ENCODE measurements at regions of chr7 and their contacts with region 1.

Region 1: DNA sequence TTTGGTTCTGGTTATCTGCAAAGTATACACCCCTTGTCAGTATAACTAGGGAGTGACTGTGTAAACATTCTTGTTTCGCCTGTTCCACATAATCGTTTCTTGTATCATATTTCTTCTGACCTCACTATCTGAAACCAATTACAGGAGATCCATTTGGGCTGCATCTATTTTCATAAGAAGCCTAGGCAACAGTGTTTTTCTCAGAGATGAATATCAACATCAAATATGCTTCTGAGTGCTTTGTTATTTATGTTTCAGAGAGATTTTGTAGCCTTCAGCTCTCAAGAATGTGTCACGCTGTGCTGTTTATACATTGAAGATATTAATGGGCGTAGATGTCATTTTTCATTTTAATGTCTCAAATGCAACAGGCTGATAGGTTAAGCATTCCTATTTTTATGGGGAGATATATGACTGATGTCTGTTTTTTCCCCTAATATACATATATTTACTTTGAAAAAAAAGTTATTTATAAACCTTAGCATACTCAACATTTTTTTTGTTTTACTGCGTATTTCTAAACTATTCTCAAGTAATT is 115.5 kb downstream of the FOXP2 start:
- DNase-seq: no peak
- ATAC-seq: peak; percentile 56; the same call in 1 of the 2 replicates
- H3K4me3 ChIP-seq: no peak overlapping the region
- H3K27ac ChIP-seq: no peak overlapping the region
- H3K4me1 ChIP-seq: no peaks in the 10 kb centered on the region; the same call in 1 of the 2 replicates
- H3K27me3 ChIP-seq: no peaks in the 10 kb centered on the region
- CTCF ChIP-seq: no peak

Region 2: GRCh38 chr7:114405427-114405826 is 124.7 kb before region 1 on chr7:
- CTCF ChIA-PET with region 1: no interaction called
- POLR2A ChIA-PET with region 1: no interaction called
- in situ Hi-C with region 1: no loop called
- intact Hi-C with region 1: no loop called
- DNase-seq: no peak
- ATAC-seq: no peak; the same call in 1 of the 2 replicates
- H3K4me3 ChIP-seq: no peak overlapping the region
- H3K27ac ChIP-seq: no peak overlapping the region
- H3K4me1 ChIP-seq: no peaks in the 10 kb centered on the region
- H3K27me3 ChIP-seq: no peaks in the 10 kb centered on the region
- CTCF ChIP-seq: peak; percentile 44; the same call in 1 of the 2 replicates

Region 3: GRCh38 chr7:114502454-114503254 is 27.5 kb before region 1 on chr7:
- CTCF ChIA-PET with region 1: no interaction called
- POLR2A ChIA-PET with region 1: no interaction called
- in situ Hi-C with region 1: no loop called
- intact Hi-C with region 1: loop called (anchors 1 kb)
- DNase-seq: no peak
- ATAC-seq: peak; percentile 87
- H3K4me3 ChIP-seq: no peak overlapping the region
- H3K27ac ChIP-seq: peak overlapping the region; percentile 76
- H3K4me1 ChIP-seq: peaks cover 13% of the 10 kb centered on the region; the same call in 1 of the 2 replicates
- H3K27me3 ChIP-seq: no peaks in the 10 kb centered on the region
- CTCF ChIP-seq: no peak

Region 4: GRCh38 chr7:114574384-114574783 is 44.2 kb after region 1 on chr7:
- CTCF ChIA-PET with region 1: no interaction called
- POLR2A ChIA-PET with region 1: interaction called, 12 read pairs
- in situ Hi-C with region 1: no loop called
- intact Hi-C with region 1: no loop called
- DNase-seq: no peak
- ATAC-seq: no peak
- H3K4me3 ChIP-seq: no peak overlapping the region
- H3K27ac ChIP-seq: no peak overlapping the region
- H3K4me1 ChIP-seq: no peaks in the 10 kb centered on the region
- H3K27me3 ChIP-seq: no peaks in the 10 kb centered on the region
- CTCF ChIP-seq: no peak

Region 5: DNA sequence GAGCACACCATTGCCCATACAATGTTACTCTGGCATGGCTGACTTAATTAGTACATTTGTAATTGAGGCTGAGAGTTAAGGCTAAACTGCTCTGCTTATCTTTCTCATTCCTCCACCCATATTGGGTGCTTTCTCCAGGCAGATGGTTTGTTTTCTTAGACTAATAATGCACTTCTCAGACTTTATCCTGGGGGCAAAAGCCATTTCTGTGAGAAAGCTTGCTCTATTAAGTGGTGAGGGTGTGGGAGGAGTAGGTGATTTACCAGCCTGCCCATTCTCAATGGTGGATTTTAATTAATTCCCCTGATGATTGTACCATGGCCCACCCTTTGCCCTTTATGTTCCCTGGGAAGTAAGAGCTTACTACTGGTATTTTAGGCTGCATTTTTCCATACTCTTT is 59.3 kb after region 1 on chr7:
- CTCF ChIA-PET with region 1: no interaction called
- POLR2A ChIA-PET with region 1: no interaction called
- in situ Hi-C with region 1: no loop called
- intact Hi-C with region 1: loop called (anchors 10 kb)
- DNase-seq: no peak
- ATAC-seq: no peak
- H3K4me3 ChIP-seq: no peak overlapping the region
- H3K27ac ChIP-seq: no peak overlapping the region
- H3K4me1 ChIP-seq: no peaks in the 10 kb centered on the region
- H3K27me3 ChIP-seq: no peaks in the 10 kb centered on the region
- CTCF ChIP-seq: no peak

Measured in Panc1 (cell line).